ENCODE measurements at regions of chr19 and their contacts with region 1.

Region 1: DNA sequence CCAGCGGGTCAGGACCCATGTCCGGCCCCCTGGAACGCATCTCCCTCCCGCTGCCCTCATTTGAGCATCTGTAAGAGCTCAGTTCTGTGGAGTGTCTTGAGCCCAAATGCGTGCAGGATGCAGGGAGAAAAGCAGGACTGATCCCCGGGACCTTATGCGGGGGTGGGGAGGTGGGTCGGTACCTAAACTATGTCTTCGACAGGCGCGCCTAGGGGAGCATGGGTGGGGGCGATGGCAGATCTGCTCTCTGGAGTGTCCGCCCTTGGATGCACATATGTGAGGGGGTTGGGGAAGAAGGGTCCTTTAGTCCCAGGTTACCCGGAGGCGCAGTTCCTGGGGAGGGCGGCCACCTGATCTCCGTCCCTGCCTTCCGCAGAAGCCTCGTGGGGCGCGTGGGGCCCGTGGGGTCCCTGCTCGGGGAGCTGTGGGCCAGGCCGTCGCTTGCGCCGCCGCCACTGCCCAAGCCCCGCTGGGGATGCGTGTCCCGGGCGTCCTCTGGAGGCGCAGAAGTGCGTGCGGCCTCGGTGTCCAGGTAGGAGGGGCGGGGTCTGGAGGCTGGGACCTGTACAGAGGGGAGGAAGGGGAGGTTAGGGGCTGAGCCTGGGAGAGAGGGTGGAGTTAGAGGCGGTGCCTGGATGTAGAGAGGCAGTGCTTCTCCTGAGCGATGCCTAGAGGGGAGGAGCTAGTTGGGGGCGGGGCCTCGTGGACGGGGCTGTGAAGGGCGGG is 2.8 kb downstream of the CILP2 start:
- DNase-seq: no peak

Region 2: GRCh38 chr19:18879579-18880373 is 661.1 kb before region 1 on chr19:
- intact Hi-C with region 1: no loop called
- DNase-seq: no peak

Region 3: DNA sequence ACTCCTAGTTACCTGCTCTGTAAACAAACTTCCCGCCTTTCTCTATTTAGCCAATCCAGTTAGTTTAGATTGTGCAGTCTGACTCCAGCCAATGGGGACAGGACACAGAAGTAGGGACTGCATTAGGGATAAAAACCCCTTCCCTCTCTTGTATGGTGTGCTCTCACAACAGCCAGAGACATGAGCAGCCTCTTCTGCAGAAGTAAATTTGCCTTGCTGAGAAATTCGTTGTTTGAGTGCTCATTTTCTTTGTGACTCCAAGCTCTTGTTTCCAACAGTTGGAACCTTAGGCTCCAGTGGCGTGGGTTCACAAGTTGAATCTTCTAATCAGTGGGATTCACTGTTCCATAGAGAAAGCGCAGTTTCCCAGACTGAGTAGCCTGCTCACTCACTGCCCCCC is 426.0 kb after region 1 on chr19:
- intact Hi-C with region 1: loop called in 1 of 2 experiments (anchors 10 kb)
- DNase-seq: no peak

Measured in posterior vena cava (tissue), 2 donors.